Heart left ventricle (tissue), 16 donors: ENCODE measurements at regions of chr10 and their contacts with region 1.

Region 1: DNA sequence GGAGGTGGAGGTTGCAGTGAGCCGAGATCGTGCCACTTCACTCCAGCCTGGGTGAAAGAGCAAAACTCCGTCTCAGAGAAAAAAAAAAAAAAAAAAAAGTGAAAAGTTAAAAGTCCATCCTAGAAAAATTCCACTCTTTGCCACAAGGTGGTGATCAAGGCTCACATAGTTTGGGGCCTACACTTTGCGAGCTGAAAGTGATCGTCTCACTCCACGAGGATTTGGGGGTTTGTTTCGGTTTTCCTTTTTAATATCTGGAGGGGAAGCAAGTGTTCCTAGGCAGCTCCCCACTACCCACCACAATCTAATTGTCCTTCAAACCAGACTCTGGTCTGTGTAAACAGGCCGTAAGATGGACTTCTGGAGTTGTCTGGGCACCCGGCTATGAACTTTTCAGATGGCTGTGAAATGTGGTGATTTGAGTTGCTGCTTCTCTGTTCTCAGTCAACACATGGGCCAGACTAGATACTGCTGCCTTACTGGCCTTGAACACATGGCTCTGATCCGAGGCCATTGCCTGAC is 27.1 kb downstream of the PRLHR start:
- DNase-seq: peak in 2 of 5 donors; percentile 48 to 54
- ATAC-seq: peak in 3 of 4 donors; percentile 35 to 73 (median 58)
- H3K4me3 ChIP-seq: peak overlapping the region in 2 of 12 donors; percentile 21 to 22
- H3K27ac ChIP-seq: no peak overlapping the region
- H3K4me1 ChIP-seq: peaks cover 0 to 23% (median 9%) of the 10 kb centered on the region in 12 donors
- H3K27me3 ChIP-seq: peaks cover 0 to 5% (median 0%) of the 10 kb centered on the region in 9 donors
- CTCF ChIP-seq: peak; percentile 64 to 82 (median 78)
- POLR2A ChIP-seq: no peak

Region 2: DNA sequence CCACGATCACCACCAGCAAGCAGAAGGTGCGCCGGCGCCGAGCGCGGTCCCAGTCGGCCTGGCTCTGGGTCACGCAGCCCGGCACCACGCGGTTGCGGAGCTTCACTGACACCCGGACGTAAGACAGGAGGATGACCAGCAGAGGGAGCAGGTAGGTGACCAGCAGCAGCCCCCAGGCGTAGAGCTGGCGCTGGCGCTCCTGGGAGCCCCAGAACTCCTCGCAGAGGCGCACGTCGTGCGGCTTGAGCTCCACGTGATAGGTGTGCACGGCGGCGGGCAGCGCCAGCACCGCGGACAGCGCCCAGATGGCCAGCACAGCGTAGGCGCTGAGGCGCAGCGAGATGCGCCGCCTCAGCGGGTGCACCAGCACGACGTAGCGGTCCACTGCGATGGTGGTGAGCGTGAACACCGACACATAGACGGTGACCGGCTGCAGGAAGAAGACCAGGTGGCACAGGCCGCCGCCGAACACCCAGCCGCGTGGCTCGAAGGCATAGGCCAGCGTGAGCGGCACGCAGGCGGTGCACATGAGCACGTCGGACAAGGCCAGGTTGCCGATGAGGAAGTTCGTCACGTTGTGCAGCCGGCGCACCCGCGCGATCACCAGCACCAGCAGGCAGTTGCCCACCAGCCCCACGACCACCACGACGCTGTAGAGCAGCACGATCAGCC is 26.1 kb after region 1 on chr10:
- intact Hi-C with region 1: no loop called
- DNase-seq: peak in 3 of 5 donors; percentile 22 to 68 (median 30)
- ATAC-seq: peak in 3 of 4 donors; percentile 52 to 81 (median 77)
- H3K4me3 ChIP-seq: no peak overlapping the region
- H3K27ac ChIP-seq: no peak overlapping the region
- H3K4me1 ChIP-seq: no peaks in the 10 kb centered on the region
- H3K27me3 ChIP-seq: peaks cover 32 to 93% (median 54%) of the 10 kb centered on the region in 9 donors
- CTCF ChIP-seq: peak in 4 of 12 donors; percentile 6 to 32 (median 12)
- POLR2A ChIP-seq: no peak

Region 3: DNA sequence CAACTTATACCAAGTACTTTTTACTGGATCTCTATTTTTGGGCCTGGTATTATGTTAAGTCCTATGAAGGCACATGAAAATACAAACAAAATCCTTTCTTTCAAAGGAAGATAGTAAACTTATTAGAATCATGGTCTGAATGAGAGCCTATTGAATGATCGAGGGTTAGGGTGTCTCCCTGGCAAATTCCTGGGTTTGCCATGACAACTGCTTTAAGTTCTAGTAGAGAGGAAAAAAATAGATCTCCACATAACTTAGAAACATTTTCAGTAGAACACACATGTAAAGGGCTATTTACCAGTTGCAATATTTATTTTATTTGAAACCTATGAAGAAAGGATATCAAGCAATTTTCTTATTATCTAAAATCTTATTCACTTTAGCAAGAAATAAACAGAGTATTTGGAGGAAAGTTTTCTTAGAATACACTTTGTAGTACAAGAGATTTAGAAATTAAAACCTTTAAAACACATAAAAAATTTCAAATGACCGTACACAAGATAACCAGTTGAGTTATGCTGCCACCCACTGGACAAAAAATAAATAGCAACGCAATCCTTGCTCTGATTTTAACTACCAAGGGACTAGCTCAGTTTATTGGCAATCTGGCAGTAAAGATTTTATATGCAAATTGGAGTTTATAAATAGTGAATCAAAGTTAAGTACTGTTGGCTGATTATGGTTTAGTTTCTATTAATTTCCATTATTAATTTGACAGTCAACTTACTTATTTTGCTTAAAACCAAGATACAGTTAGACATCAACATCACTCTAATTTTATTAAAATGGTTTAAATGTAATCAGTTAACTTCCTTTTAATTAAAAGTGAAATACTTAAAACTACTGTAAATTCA is 152.5 kb after region 1 on chr10:
- intact Hi-C with region 1: loop called (anchors 1 to 5 kb)
- DNase-seq: peak in 2 of 5 donors; percentile 28 to 36
- ATAC-seq: no peak
- H3K4me3 ChIP-seq: no peak overlapping the region
- H3K27ac ChIP-seq: no peak overlapping the region
- H3K4me1 ChIP-seq: peaks cover 0 to 29% (median 13%) of the 10 kb centered on the region in 12 donors
- H3K27me3 ChIP-seq: no peaks in the 10 kb centered on the region
- CTCF ChIP-seq: peak; percentile 72 to 91 (median 86)
- POLR2A ChIP-seq: no peak

Region 4: GRCh38 chr10:118850418-118851061 is 282.2 kb after region 1 on chr10:
- intact Hi-C with region 1: loop called in 1 of 10 experiments (anchors 5 kb)
- DNase-seq: peak; percentile 41 to 85 (median 51)
- ATAC-seq: no peak
- H3K4me3 ChIP-seq: no peak overlapping the region
- H3K27ac ChIP-seq: no peak overlapping the region
- H3K4me1 ChIP-seq: peaks cover 0 to 12% (median 0%) of the 10 kb centered on the region in 12 donors
- H3K27me3 ChIP-seq: no peaks in the 10 kb centered on the region
- CTCF ChIP-seq: peak; percentile 31 to 62 (median 49)
- POLR2A ChIP-seq: no peak